ENCODE measurements at regions of chr13 and their contacts with region 1.

Region 1: GRCh38 chr13:33723772-33724435 is 94.0 kb upstream of the RFC3 start:
- DNase-seq: no peak
- ATAC-seq: peak; percentile 72
- H3K4me3 Mint-ChIP-seq: no peak overlapping the region
- H3K27ac Mint-ChIP-seq: no peak overlapping the region
- H3K4me1 Mint-ChIP-seq: peaks cover 21% of the 10 kb centered on the region
- H3K27me3 Mint-ChIP-seq: peaks cover 21% of the 10 kb centered on the region
- CTCF ChIP-seq: no peak

Region 2: GRCh38 chr13:33090755-33091414 is 633.0 kb before region 1 on chr13:
- CTCF ChIA-PET with region 1: no interaction called
- POLR2A ChIA-PET with region 1: no interaction called
- intact Hi-C with region 1: no loop called
- DNase-seq: no peak
- ATAC-seq: no peak
- H3K4me3 Mint-ChIP-seq: no peak overlapping the region
- H3K27ac Mint-ChIP-seq: no peak overlapping the region
- H3K4me1 Mint-ChIP-seq: no peaks in the 10 kb centered on the region
- H3K27me3 Mint-ChIP-seq: peaks cover 8% of the 10 kb centered on the region
- CTCF ChIP-seq: no peak

Region 3: DNA sequence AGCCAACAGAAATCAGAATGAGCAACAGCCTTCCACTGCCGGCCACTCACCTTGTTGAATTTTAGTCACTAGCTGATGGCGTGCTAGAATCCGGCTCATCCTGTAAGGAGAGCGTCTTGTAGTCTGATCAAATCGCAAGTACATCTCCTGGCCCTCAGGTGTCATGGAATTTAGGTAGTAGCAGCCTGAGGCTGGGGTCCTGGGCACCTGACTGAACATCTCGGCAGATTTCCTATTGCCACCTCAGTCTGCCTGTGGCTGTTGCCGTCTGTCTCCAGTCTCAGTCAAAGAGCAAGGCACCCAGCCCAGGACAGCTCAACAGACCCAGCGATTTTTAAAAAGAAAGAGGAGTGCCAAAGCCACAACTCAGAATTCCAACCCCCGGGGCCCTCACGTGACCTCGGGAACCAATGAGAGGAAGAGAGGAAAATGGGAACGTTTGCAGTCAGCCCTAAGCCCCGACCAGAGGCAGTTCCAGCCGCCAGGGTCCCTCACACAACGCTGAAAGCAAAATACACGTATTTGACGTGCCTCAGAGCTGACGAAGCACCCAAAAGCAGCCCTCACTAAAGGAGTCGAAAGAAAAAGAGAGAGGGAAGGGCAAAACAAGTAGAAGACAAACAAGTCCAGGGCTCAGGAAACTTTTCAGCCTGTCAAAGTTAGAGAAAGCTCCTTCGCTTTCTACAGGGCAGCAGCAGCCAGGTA is 438.3 kb before region 1 on chr13 and contains the start of gene STARD13:
- CTCF ChIA-PET with region 1: no interaction called
- POLR2A ChIA-PET with region 1: no interaction called
- intact Hi-C with region 1: loop called (anchors 5 kb)
- DNase-seq: no peak
- ATAC-seq: peak; percentile 37
- H3K4me3 Mint-ChIP-seq: peak within 1 kb of the TSS; percentile 82
- H3K27ac Mint-ChIP-seq: no peak within 1 kb of the TSS
- H3K4me1 Mint-ChIP-seq: peaks cover 17% of the 10 kb centered on the region
- H3K27me3 Mint-ChIP-seq: peaks cover 25% of the 10 kb centered on the region
- CTCF ChIP-seq: no peak
- total RNA-seq, gene STARD13: 0.07 and 0.13 TPM in 2 replicates

Region 4: DNA sequence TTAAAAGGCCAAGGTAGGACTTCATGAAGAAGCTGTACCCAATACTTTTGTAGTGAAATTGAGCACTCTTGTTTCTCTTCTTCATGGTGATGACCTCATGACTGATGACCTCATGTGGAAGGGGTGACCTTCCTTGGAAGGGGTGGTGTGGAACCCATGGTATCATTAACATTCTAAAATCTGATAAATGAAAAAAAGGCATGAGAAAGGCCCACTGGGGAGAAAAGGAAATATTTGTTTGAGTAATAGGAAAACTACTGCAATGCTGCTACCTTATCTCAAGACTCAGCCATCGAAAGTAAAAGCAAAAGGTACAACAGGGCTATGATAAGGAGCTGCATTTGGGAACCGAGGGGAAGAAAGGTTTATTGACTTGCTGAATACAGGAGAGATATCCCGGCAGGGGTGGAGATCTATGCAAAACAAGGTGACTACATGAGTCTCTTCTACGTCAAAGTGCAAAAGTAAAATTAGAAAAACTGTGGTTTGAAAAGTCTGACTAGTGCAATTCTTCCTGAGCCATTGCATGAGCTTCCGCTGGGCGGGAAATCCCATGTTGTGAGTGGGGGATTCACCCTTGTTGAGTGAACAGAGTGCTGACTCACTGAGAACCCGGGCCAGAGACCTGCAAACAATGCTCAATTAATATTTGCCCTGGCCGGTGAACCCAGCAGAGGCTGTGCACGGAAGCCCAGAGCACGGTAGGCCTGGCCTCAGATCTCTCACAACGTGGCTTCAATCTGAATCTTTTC is 44.8 kb before region 1 on chr13:
- CTCF ChIA-PET with region 1: no interaction called
- POLR2A ChIA-PET with region 1: no interaction called
- intact Hi-C with region 1: loop called (anchors 2 kb)
- DNase-seq: peak; percentile 45
- ATAC-seq: peak; percentile 94
- H3K4me3 Mint-ChIP-seq: peak overlapping the region; percentile 74
- H3K27ac Mint-ChIP-seq: peak overlapping the region; percentile 74
- H3K4me1 Mint-ChIP-seq: peaks cover 12% of the 10 kb centered on the region
- H3K27me3 Mint-ChIP-seq: no peaks in the 10 kb centered on the region
- CTCF ChIP-seq: no peak

Measured in activated B cell treated with CpG ODN at 0.5 μM for 24 hours (primary cell).